ENCODE measurements at regions of chr1 and their contacts with region 1.

Region 1: DNA sequence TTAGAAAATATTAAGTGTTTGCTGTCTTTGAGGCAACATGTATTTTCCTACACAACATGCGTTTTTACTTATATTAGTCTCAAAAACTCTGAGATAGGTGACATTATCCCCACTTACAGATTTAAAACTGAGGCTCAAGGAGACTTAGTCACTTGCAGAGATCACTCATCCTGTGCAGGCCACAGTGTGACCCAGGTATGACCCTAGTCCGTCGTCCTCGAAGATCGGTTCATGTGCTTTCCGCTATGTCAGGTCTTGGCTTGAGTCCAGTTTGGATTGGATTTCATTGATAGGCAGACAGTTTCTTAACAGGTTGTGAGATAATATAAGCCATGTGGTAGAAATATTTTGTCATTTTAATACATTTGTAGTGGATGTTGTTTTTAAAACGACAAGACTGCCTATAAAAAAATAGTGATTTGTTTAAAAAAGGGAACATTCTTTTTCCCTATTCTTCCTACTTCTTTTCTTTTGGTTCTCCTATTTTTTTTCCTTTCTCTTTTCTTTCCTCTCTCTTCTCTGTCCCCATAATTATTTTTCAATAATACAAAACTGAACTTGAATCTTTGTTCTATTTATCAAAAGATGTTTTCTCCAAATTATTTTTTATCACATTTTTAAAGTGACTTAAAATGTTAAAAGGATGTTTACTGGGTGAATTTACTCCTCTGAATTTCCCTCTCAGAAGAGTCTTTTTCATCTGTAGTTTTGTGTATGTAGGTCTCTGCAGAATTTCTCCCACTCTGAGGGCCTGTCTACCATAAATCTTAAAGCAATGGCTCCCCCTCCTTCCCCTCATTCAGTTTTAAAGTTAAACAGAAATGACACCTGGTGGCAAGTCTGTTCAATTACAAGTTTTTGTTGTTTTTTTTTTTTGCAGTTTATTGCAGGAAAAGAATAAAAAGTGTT is 81.8 kb downstream of the PHTF1 start:
- DNase-seq: no peak
- H3K4me3 ChIP-seq: no peak overlapping the region
- H3K27ac ChIP-seq: no peak overlapping the region
- H3K4me1 ChIP-seq: no peaks in the 10 kb centered on the region
- H3K27me3 ChIP-seq: no peaks in the 10 kb centered on the region
- CTCF ChIP-seq: peak; percentile 56 to 67 (median 64)
- POLR2A ChIP-seq: no peak

Region 2: DNA sequence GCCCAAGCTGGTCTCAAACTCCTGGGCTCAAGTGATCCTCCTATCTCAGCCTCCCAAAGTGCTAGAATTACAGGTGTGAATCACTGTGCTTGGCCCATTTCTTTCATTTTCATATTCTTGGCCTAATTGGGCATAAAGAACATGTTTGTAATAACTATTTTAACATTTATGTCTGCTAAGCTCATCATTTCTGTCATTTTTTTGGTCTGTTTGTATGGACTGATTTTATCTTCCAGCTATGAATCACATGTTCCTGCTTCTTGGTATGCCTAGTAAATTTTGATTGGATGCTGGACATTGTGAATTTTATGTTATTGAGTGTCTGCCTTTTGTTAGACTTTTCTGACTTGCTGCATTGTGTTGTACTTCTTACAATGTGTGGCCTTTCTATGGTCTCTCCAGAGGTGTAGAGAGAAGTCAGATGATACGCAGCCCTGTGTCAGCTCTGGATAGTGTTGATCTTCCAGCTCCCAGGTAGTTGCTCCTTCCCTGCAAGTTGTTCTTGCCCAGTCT is 923.3 kb before region 1 on chr1:
- intact Hi-C with region 1: loop called (anchors 5 kb)
- DNase-seq: no peak
- H3K4me3 ChIP-seq: no peak overlapping the region
- H3K27ac ChIP-seq: no peak overlapping the region
- H3K4me1 ChIP-seq: no peaks in the 10 kb centered on the region
- H3K27me3 ChIP-seq: no peaks in the 10 kb centered on the region
- CTCF ChIP-seq: no peak
- POLR2A ChIP-seq: no peak

Region 3: DNA sequence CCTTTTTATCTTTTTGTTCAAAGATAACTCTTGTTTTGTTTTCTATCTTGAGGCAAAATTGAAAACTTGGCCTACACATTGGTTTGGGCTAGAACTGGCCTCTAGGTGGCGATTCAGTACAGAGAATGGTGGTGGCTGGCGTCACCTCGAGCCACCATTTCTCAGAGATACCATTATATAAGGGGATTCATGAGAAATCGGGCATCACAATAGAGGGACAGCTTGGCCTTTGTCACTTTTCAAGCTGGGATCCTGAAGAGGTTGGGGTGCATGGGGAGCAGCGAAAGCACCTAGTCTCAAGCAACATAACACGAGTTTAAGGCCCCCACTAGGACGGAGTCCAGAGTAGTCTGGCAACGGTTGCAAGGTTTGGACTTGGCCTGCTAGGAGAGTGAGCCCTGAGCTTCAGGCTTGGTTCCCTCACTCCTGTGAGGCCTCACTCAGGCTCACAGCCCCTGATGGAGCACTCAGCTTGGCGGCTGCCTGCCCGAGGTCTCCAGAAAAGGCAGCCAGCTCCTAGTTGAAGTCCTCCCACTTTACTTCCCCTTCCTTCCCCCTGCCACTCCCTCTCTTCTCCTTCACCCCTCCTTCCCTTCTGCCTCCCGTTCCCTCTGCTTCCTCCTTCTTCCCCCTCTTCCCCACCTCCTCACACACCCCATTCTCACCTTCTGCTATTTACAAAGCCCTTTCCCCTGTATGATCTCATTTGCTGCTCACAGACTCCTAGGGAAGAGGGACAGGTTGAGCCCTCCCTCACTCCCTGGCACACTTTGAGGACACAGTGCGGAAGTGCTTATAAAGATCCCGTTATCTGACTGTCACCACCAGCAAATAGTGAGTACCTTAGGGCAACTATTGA is 536.7 kb before region 1 on chr1:
- intact Hi-C with region 1: loop called (anchors 10 kb)
- DNase-seq: peak in 1 of 2 donors; percentile 28
- H3K4me3 ChIP-seq: peak overlapping the region in 2 of 3 donors; percentile 10 to 17
- H3K27ac ChIP-seq: peak overlapping the region; percentile 34 to 50
- H3K4me1 ChIP-seq: no peaks in the 10 kb centered on the region
- H3K27me3 ChIP-seq: no peaks in the 10 kb centered on the region
- CTCF ChIP-seq: peak in 2 of 3 donors; percentile 77 to 81
- POLR2A ChIP-seq: no peak

Region 4: DNA sequence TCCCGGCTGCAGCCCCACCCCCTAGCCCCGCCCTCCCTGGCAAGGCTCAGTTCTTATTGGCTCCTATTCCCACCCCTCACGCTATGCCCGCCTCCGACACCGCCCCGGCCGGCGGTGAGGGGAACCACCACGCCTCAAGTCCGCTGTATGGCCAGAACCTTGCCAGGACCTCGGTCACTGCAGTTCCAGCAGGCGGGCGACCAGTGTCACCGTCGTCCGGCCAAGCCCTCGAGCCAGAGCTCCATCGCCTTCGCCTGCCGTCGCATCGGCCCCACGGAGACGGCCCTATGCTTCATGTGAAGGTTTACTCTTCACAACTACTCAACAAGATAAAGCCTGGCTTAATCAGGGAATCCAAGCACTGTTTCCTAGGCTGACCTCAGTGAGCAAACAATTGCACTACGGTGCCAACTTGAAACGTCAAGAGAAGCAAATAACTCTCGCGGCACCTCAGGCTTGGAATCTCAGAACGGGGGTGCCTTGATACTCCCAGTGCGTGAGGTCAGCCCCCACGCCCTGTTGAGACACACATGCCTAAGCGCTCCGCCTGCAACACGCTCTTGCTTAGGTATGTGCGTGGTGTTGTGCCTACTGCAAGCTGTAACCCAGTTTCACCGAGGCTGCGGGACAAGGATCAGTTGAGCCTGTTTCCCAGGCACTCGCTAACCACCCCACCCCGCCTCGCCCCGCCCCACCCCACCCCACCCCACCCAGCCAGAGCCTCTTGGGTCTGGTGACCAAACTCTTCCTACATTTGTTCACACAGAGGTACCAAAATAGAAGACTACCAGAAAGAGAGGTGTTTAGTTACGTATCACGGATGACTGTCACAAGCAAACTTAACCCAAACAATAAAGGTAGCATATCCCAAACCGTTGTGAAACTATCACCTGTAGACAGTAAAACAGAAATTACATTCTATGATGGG is 992.8 kb after region 1 on chr1:
- intact Hi-C with region 1: no loop called
- DNase-seq: peak; percentile 89 to 92
- H3K4me3 ChIP-seq: peak overlapping the region; percentile 59 to 96 (median 73)
- H3K27ac ChIP-seq: peak overlapping the region; percentile 77 to 89
- H3K4me1 ChIP-seq: no peaks in the 10 kb centered on the region
- H3K27me3 ChIP-seq: no peaks in the 10 kb centered on the region
- CTCF ChIP-seq: peak in 1 of 3 donors; percentile 26
- POLR2A ChIP-seq: no peak

Region 5: GRCh38 chr1:115084902-115085511 is 1407.5 kb after region 1 on chr1:
- intact Hi-C with region 1: no loop called
- DNase-seq: no peak
- H3K4me3 ChIP-seq: no peak overlapping the region
- H3K27ac ChIP-seq: peak overlapping the region; percentile 6 to 30
- H3K4me1 ChIP-seq: no peaks in the 10 kb centered on the region
- H3K27me3 ChIP-seq: peaks cover 0 to 3% of the 10 kb centered on the region in 2 donors
- CTCF ChIP-seq: no peak
- POLR2A ChIP-seq: no peak